H1 (cell line): ENCODE measurements at regions of chr1 and their contacts with region 1.

Region 1: GRCh38 chr1:242477944-242478343 is 46.6 kb downstream of the PLD5 start:
- DNase-seq: no peak
- H3K4me3 ChIP-seq: no peak overlapping the region
- H3K27ac ChIP-seq: no peak overlapping the region
- H3K4me1 ChIP-seq: no peaks in the 10 kb centered on the region
- H3K27me3 ChIP-seq: no peaks in the 10 kb centered on the region
- CTCF ChIP-seq: no peak
- EP300 ChIP-seq: no peak
- POLR2A ChIP-seq: no peak
- RAD21 ChIP-seq: no peak

Region 2: GRCh38 chr1:242454262-242455045 is 23.5 kb before region 1 on chr1:
- CTCF ChIA-PET with region 1: interaction called, 14 read pairs
- POLR2A ChIA-PET with region 1: no interaction called
- DNase-seq: no peak
- H3K4me3 ChIP-seq: no peak overlapping the region
- H3K27ac ChIP-seq: no peak overlapping the region
- H3K4me1 ChIP-seq: peaks cover 2 to 7% (median 3%) of the 10 kb centered on the region in 4 experiments; a peak in 4 of 7 replicates
- H3K27me3 ChIP-seq: no peaks in the 10 kb centered on the region
- CTCF ChIP-seq: peak in 2 of 3 experiments; percentile 62 to 68; a peak in 3 of 4 replicates
- EP300 ChIP-seq: no peak
- POLR2A ChIP-seq: no peak
- RAD21 ChIP-seq: peak; percentile 83 to 84